B cell (primary cell): ENCODE measurements at regions of chr19 and their contacts with region 1.

Region 1: DNA sequence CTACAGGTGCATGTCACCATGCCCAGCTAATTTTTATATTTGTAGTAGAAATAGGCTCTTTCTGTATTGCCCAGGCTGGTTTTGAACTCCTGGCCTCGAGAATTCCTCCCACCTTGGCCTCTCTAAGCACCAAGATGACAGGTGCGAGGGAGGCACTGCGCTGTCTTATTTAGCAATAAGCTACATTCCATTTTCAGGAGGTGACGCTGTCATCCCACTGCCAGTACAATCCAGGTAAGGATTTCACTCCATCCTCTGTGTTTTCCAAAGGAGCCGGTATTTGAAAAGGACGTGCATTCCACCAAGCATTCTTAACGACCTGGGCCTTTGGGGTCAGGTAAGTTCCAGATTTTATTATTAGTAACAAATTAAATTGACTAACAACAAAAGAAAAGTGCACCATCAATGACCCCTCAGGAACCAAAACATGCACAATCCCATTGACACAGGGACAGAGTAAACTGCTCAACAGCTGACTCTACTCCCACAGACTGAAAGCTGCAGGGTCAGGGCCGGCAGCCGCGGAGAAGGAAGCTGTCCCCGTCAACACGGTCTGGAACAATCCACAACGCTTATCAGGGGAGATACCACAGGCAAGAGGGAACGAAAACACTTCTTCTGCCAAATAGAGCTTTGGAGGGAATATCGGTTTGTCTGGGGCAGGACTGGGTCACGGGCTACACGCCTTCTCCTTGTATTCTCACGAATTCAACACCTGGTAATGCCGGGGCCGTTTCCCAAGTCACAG is 82.8 kb downstream of the INSR start:
- DNase-seq: no peak
- ATAC-seq: no peak
- H3K4me3 ChIP-seq: no peak overlapping the region
- H3K4me3 Mint-ChIP-seq: no peak overlapping the region
- H3K27ac ChIP-seq: no peak overlapping the region
- H3K27ac Mint-ChIP-seq: no peak overlapping the region
- H3K4me1 ChIP-seq: peaks cover 11 to 22% of the 10 kb centered on the region in 2 donors
- H3K4me1 Mint-ChIP-seq: peaks cover 25% of the 10 kb centered on the region
- H3K27me3 ChIP-seq: peaks cover 0 to 2% (median 0%) of the 10 kb centered on the region in 4 experiments
- H3K27me3 Mint-ChIP-seq: peaks cover 3% of the 10 kb centered on the region
- CTCF ChIP-seq: no peak

Region 2: GRCh38 chr19:7161292-7161691 is 50.1 kb before region 1 on chr19:
- CTCF ChIA-PET with region 1: no interaction called
- POLR2A ChIA-PET with region 1: no interaction called
- intact Hi-C with region 1: no loop called
- DNase-seq: no peak
- ATAC-seq: no peak
- H3K4me3 ChIP-seq: no peak overlapping the region
- H3K4me3 Mint-ChIP-seq: no peak overlapping the region
- H3K27ac ChIP-seq: no peak overlapping the region
- H3K27ac Mint-ChIP-seq: no peak overlapping the region
- H3K4me1 ChIP-seq: no peaks in the 10 kb centered on the region
- H3K4me1 Mint-ChIP-seq: no peaks in the 10 kb centered on the region
- H3K27me3 ChIP-seq: no peaks in the 10 kb centered on the region
- H3K27me3 Mint-ChIP-seq: no peaks in the 10 kb centered on the region
- CTCF ChIP-seq: no peak

Region 3: GRCh38 chr19:7177926-7178325 is 33.5 kb before region 1 on chr19:
- CTCF ChIA-PET with region 1: no interaction called
- POLR2A ChIA-PET with region 1: no interaction called
- intact Hi-C with region 1: loop called (anchors 5 kb)
- DNase-seq: no peak
- ATAC-seq: no peak
- H3K4me3 ChIP-seq: no peak overlapping the region
- H3K4me3 Mint-ChIP-seq: no peak overlapping the region
- H3K27ac ChIP-seq: no peak overlapping the region
- H3K27ac Mint-ChIP-seq: peak overlapping the region; percentile 46
- H3K4me1 ChIP-seq: peaks cover 26 to 33% of the 10 kb centered on the region in 2 donors
- H3K4me1 Mint-ChIP-seq: peaks cover 40% of the 10 kb centered on the region
- H3K27me3 ChIP-seq: no peaks in the 10 kb centered on the region
- H3K27me3 Mint-ChIP-seq: peaks cover 5% of the 10 kb centered on the region
- CTCF ChIP-seq: no peak